Right ventricle myocardium inferior (tissue), 1 donor: ENCODE measurements at regions of chr1 and their contacts with region 1.

Region 1: DNA sequence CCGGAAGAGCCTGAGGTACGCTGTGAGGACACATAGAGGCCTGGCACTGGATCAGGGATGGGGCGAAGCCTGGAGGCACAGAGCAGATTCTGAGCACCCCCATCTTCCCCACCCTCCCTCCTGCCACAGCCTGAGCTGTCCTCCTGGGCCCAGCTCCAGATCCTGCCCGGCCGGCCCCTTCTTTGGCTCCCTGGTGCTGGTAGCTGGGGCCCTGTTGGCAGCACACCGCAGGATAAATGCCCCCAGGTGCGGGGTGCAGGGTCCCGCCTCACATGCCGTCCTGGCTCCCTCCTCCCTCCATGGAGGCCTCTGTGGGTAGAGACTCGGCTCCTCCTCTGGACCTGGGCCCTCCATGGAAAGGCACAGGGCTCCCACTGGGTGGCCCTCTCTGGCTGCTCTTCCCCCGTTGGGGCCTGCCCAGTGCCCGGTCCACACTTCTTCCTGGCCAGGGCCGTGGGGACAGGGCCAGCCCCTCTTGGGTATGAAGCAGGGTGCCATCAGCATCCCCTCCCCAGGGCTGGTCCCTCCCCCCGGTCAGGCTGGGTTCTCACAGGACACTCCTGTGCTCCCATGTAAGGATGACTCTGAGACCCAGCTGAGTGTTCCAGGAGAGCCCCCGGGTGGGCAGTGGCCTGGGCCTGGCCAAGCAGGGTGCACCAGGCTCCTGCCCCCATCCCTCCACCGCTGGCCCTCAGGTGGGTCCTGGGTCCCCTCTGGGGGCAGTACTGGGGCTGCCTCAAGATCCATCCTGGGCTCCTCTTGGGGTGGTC is 1.1 kb upstream of the OBSCN start:
- DNase-seq: no peak
- ATAC-seq: no peak

Region 2: DNA sequence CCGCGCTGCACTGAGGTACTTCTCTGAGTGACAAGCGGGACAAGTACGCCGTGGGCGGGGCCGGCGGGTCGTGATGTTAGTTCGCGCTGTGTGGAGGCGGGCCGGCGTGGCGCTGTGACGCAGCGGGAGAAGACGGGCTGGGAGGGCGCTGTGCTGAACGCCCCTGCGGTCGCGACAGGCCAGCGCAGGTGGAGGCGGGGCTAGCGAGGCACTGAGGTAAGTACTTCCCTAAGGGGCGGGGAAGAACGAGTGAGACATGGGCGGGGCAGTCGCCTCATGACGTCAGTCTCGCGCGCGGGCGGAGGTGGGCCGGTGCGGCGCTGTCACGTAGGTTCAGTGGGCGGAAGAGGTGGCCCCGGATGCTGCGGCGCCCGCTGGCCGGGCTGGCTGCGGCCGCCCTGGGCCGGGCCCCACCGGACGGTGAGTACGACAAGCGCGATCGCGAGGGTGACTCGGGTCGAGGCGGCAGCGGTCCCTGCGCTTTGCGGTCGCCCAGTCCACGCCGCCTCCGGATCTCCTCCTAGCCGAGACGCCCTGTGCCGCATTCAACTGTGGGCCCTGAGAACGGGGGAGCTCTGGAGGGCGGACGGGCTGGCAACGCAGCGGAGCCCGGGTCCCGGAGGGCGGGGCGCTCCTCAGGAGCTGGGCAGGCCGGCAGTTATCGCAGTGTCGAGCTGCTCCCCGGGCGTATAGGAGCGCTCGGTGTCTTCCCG is 66.7 kb before region 1 on chr1 and contains the start of gene GUK1:
- intact Hi-C with region 1: loop called (anchors 2 kb)
- DNase-seq: peak; percentile 100
- ATAC-seq: peak; percentile 95
- total RNA-seq, gene GUK1: 162 TPM

Region 3: GRCh38 chr1:228156901-228157728 is 49.7 kb before region 1 on chr1:
- intact Hi-C with region 1: no loop called
- DNase-seq: peak; percentile 34
- ATAC-seq: no peak